ENCODE measurements at regions of chr17 and their contacts with region 1.

Region 1: DNA sequence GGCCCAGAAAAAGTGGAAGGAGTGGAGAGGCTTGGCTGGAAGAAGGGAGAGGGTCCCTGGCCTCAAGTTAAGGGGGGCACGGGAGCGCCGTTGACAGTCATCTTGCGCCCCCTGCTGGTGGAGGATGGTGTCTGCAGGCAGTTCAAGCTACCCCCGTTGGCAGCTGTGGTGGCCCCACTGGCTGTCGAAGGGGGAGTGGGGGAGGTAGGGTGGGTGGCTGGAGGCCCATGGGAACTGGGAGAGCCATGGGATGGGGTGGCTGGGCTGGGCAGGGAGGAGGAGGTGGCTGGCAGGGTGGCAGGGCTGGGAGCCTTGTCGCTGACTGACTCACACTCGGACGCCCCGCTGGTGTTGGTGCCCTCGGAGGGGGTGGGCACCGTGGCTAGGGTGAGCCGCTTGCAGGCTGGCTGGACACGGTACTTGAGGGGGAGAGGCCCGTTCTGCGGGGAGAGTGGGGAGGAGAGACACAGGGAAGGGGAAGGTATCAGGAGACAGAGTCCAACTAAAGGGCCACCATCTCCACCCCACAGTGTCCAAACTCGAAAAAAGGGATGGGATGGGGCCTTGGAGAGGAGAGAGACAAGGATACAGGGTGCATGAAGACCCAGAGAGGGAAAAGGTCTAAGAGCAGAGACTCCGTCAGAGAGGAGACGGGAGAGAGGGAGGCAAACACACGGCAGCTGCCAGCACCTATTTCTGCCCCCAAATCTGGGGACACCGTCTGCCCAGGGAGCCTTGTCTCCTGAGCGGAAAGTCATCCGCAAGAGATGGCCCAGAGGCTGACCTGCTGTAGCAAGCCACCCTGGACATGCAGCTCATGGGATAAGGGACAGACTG is 5.2 kb downstream of the CISD3 start:
- DNase-seq: no peak
- H3K4me3 ChIP-seq: no peak overlapping the region
- H3K27ac ChIP-seq: no peak overlapping the region
- H3K4me1 ChIP-seq: peaks cover 19% of the 10 kb centered on the region
- H3K27me3 ChIP-seq: no peaks in the 10 kb centered on the region
- CTCF ChIP-seq: peak; percentile 78 to 94
- POLR2A ChIP-seq: peak; percentile 11

Region 2: DNA sequence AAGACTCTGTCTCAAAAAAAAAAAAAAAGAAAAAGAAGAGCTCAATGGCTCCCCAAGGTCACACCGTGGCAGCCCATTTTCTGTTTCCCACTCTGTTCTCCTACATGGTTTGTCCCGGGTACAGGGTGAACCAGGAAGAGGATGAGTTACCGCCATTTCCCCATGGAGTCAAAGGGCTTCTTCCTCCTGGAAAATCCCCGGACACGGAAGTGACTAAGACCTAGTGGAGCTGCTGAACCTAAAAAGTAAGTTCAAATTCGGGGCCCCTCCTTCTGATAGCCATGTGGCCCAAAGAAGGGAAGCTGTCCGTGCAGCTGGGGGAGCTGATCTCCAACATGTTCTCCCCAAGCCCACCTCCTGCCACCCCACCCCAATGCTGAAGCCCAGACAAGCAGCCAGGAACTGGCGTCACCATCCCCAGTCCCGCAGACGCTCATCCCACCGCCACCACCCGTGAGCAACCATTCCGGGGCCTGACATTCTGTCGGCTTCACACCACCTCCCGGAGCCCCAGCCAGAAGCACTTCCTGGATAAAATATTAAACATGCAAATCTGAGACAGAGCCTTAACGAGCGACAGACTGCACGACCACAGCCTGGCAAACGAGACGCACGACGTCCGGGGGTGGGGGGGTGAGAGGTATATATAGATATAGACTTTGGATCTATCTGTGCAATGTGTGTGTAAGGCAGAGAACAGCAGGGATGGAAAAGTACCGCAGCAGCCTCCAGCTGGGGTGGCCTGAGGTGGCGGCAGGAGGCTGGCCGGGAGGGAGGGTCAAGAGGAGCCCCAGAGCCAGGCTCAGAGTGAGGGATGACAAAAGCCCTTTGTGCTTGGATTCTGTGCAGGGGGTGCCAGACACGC is 78.2 kb before region 1 on chr17:
- CTCF ChIA-PET with region 1: no interaction called
- POLR2A ChIA-PET with region 1: no interaction called
- dilution Hi-C with region 1: no loop called
- intact Hi-C with region 1: no loop called
- DNase-seq: no peak
- H3K4me3 ChIP-seq: no peak overlapping the region
- H3K27ac ChIP-seq: no peak overlapping the region
- H3K4me1 ChIP-seq: no peaks in the 10 kb centered on the region
- H3K27me3 ChIP-seq: peaks cover 7 to 10% of the 10 kb centered on the region in 2 experiments
- CTCF ChIP-seq: no peak
- POLR2A ChIP-seq: no peak

Region 3: DNA sequence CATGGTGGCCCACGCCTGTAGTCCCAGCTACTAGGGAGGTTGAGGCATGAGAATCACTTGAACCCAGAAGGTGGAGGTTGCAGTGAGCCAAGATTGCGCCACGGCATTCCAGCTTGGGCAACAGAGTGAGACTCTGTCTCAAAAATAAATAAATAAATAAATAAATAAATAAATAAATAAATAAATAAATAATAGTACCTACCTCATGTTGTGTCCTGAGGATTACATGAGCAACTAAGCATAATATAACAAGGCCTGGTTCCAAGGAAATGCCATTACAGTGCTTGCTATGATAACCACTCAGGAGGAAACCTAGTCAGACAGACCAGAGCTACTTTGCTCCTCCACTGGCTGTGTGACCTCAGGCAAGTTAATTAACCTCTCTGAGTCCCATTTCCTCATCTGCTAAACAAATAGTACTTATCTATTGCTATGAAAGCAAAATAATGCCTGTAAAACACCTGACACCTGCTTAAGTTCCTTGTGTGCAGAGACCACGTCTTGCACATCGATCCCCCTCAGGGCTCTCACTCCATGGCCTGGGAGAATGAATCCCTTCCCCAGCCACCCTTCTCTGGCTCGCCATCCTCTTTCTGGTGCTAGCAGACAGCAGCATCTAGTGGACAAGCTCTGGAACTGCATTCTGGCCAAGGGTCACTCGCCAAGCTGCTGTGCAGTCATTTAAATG is 68.1 kb before region 1 on chr17:
- CTCF ChIA-PET with region 1: interaction called, 25 read pairs
- POLR2A ChIA-PET with region 1: interaction called, 3 read pairs
- dilution Hi-C with region 1: no loop called
- intact Hi-C with region 1: no loop called
- DNase-seq: peak; percentile 72
- H3K4me3 ChIP-seq: no peak overlapping the region
- H3K27ac ChIP-seq: no peak overlapping the region
- H3K4me1 ChIP-seq: no peaks in the 10 kb centered on the region
- H3K27me3 ChIP-seq: peaks cover 38% of the 10 kb centered on the region in 2 experiments
- CTCF ChIP-seq: peak; percentile 98 to 99
- POLR2A ChIP-seq: no peak

Region 4: GRCh38 chr17:38685491-38685890 is 49.9 kb before region 1 on chr17:
- CTCF ChIA-PET with region 1: interaction called, 138 read pairs
- POLR2A ChIA-PET with region 1: interaction called, 4 read pairs
- dilution Hi-C with region 1: no loop called
- intact Hi-C with region 1: no loop called
- DNase-seq: no peak
- H3K4me3 ChIP-seq: no peak overlapping the region
- H3K27ac ChIP-seq: no peak overlapping the region
- H3K4me1 ChIP-seq: peaks cover 6% of the 10 kb centered on the region
- H3K27me3 ChIP-seq: no peaks in the 10 kb centered on the region
- CTCF ChIP-seq: no peak
- POLR2A ChIP-seq: no peak

Region 5: DNA sequence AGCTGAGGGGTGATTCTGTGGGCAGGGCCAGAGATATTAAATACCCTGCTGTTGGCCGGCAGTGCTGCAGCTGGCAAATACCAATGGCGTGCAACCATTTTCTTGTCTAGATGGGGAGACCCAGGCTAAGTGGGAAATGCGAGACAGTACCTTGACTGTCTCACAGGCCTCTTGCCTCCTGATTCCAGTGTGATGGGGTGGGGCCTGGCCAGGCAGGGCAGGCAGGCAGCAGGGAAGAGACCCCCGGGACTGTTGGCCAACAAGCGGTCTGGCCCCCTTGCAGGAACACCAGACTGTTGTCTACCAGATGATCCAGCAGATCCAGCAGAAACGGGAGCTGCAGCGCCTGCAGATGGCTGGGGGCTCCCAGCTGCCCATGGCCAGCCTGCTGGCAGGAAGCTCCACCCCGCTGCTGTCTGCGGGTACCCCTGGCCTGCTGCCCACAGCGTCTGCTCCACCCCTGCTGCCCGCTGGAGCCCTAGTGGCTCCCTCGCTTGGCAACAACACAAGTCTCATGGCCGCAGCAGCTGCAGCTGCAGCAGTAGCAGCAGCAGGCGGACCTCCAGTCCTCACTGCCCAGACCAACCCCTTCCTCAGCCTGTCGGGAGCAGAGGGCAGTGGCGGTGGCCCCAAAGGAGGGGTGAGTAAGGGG is 10.9 kb before region 1 on chr17:
- CTCF ChIA-PET with region 1: interaction called, 17 read pairs
- POLR2A ChIA-PET with region 1: interaction called, 6 read pairs
- dilution Hi-C with region 1: no loop called
- intact Hi-C with region 1: no loop called
- DNase-seq: peak; percentile 50
- H3K4me3 ChIP-seq: no peak overlapping the region
- H3K27ac ChIP-seq: no peak overlapping the region
- H3K4me1 ChIP-seq: peaks cover 7% of the 10 kb centered on the region
- H3K27me3 ChIP-seq: no peaks in the 10 kb centered on the region
- CTCF ChIP-seq: no peak
- POLR2A ChIP-seq: no peak

Region 6: DNA sequence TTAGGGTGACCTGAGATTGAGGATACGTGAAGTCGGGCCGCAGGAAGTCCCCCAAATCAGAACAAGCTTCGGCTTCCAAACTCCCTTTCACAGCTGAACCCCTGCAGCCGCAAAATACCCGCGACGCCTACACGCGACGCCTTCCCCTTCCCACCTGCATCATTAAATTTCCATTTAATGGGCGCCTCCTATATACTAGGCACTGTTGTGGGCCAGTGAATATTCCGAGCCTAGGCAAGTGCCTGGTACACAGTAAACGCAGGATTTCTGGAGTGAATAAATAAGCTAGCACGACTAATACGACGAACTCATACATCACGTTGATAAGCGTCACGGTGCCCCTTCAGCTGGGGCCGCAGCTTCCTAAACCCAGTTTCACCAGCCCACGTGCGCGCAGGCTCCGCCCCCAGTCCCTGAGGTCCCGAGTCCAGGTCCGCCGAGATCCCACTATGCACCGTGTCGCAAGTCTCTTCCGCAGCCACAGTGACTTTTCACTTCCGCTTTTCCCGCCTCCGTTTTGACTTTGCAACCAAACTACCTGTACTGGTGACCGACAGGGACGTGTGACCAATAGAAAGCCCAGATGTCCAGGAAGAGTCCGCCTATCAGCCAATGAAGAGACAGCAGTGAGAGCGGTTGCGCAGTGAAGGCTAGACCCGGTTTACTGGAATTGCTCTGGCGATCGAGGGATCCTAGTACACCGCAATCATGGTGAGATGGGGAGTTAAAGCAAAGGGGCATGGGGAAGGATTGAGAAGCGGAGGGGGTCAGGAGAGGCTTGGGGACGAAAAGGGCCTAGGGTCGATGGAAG is 16.9 kb after region 1 on chr17 and contains the start of gene PSMB3:
- CTCF ChIA-PET with region 1: interaction called, 11 read pairs
- POLR2A ChIA-PET with region 1: no interaction called
- dilution Hi-C with region 1: no loop called
- intact Hi-C with region 1: no loop called
- DNase-seq: peak; percentile 99
- H3K4me3 ChIP-seq: peak within 1 kb of the TSS; percentile 59 to 82 (median 73)
- H3K27ac ChIP-seq: peak within 1 kb of the TSS; percentile 40
- H3K4me1 ChIP-seq: peaks cover 34% of the 10 kb centered on the region
- H3K27me3 ChIP-seq: no peaks in the 10 kb centered on the region
- CTCF ChIP-seq: no peak
- POLR2A ChIP-seq: peak; percentile 3
- total RNA-seq, gene PSMB3: 213 and 227 TPM in 2 replicates

Measured in endothelial cell of umbilical vein (primary cell).